ENCODE measurements at regions of chr16 and their contacts with region 1.

Region 1: DNA sequence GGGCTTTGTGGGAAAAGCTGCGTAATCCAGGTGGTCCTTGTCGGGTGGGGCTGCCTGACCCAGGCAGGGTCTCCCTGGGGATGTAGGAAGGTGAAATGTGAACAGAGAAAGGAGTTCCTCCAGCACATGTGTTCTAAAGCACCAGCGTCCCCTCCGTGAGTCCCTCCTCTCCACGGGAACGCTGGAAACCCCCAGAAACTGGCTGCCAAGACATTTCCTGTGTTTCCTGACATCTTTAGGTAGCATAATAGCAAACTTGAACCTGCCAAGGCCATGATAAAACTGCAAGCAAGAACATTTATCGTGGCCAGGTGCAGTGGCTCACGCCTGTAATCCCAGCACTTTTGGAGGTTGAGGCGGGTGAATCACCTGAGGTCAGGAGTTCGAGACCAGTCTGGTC is 12.6 kb upstream of the PYDC1 start:
- DNase-seq: no peak
- H3K4me3 Mint-ChIP-seq: no peak overlapping the region
- H3K27ac Mint-ChIP-seq: no peak overlapping the region
- H3K4me1 Mint-ChIP-seq: no peaks in the 10 kb centered on the region
- H3K27me3 Mint-ChIP-seq: no peaks in the 10 kb centered on the region
- CTCF ChIP-seq: no peak

Region 2: GRCh38 chr16:31215287-31216162 is 14.0 kb before region 1 on chr16:
- CTCF ChIA-PET with region 1: interaction called, 11 read pairs
- intact Hi-C with region 1: no loop called
- DNase-seq: peak; percentile 66
- H3K4me3 Mint-ChIP-seq: peak overlapping the region; percentile 68
- H3K27ac Mint-ChIP-seq: no peak overlapping the region
- H3K4me1 Mint-ChIP-seq: peaks cover 9% of the 10 kb centered on the region
- H3K27me3 Mint-ChIP-seq: peaks cover 92% of the 10 kb centered on the region
- CTCF ChIP-seq: no peak

Region 3: GRCh38 chr16:31253642-31254045 is 24.1 kb after region 1 on chr16:
- CTCF ChIA-PET with region 1: no interaction called
- intact Hi-C with region 1: loop called (anchors 1 kb)
- DNase-seq: no peak
- H3K4me3 Mint-ChIP-seq: no peak overlapping the region
- H3K27ac Mint-ChIP-seq: no peak overlapping the region
- H3K4me1 Mint-ChIP-seq: peaks cover 9% of the 10 kb centered on the region
- H3K27me3 Mint-ChIP-seq: peaks cover 14% of the 10 kb centered on the region
- CTCF ChIP-seq: no peak